Spleen (tissue), 13 donors: ENCODE measurements at regions of chr14 and their contacts with region 1.

Region 1: GRCh38 chr14:91059576-91060350 is 678 bp downstream of the RPS6KA5 start:
- DNase-seq: peak; percentile 93
- H3K4me3 ChIP-seq: peak overlapping the region; percentile 75 to 92 (median 85)
- H3K27ac ChIP-seq: peak overlapping the region; percentile 88 to 99 (median 98)
- H3K4me1 ChIP-seq: peaks cover 7 to 67% (median 45%) of the 10 kb centered on the region in 6 donors
- H3K27me3 ChIP-seq: no peaks in the 10 kb centered on the region
- CTCF ChIP-seq: no peak
- POLR2A ChIP-seq: no peak

Region 2: DNA sequence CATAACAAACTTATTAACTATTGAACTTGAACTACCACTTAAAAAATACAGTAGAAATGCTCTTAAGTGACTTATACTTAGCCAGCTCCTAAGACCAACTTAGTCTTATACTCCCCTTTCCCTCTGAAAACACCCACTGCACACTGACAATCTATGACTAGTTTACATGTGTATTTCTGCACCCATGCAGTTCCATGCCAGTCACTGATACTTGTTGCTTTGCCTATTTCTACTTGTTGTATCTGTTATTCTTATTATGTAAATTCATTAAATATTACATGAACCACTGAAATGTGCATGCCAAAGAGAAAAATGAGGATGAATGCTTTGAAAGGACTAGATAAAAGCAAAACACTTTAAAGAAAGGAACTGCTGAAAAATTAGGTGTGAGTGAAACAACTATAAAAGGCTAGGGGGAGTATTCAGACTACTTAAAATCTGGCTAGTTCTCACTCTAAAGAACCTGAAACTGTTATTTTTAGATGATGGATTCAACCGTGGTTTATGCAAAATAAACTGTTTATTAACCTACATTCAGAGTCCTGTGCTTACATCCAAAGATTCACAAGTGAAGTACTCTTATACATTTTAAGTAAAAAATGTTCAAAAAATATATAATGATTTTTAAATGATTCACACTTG is 74.0 kb before region 1 on chr14:
- intact Hi-C with region 1: loop called (anchors 10 kb)
- DNase-seq: no peak
- H3K4me3 ChIP-seq: no peak overlapping the region
- H3K27ac ChIP-seq: peak overlapping the region in 1 of 8 donors; percentile 14
- H3K4me1 ChIP-seq: peaks cover 0 to 18% (median 2%) of the 10 kb centered on the region in 6 donors
- H3K27me3 ChIP-seq: no peaks in the 10 kb centered on the region
- CTCF ChIP-seq: no peak
- POLR2A ChIP-seq: no peak